ENCODE measurements at regions of chr22 and their contacts with region 1.

Region 1: GRCh38 chr22:46625113-46625842 is 5.1 kb downstream of the GRAMD4 start:
- DNase-seq: no peak
- H3K4me3 ChIP-seq: no peak overlapping the region
- H3K27ac ChIP-seq: no peak overlapping the region
- H3K4me1 ChIP-seq: peaks cover 4% of the 10 kb centered on the region
- H3K27me3 ChIP-seq: no peaks in the 10 kb centered on the region
- CTCF ChIP-seq: no peak
- POLR2A ChIP-seq: no peak

Region 2: DNA sequence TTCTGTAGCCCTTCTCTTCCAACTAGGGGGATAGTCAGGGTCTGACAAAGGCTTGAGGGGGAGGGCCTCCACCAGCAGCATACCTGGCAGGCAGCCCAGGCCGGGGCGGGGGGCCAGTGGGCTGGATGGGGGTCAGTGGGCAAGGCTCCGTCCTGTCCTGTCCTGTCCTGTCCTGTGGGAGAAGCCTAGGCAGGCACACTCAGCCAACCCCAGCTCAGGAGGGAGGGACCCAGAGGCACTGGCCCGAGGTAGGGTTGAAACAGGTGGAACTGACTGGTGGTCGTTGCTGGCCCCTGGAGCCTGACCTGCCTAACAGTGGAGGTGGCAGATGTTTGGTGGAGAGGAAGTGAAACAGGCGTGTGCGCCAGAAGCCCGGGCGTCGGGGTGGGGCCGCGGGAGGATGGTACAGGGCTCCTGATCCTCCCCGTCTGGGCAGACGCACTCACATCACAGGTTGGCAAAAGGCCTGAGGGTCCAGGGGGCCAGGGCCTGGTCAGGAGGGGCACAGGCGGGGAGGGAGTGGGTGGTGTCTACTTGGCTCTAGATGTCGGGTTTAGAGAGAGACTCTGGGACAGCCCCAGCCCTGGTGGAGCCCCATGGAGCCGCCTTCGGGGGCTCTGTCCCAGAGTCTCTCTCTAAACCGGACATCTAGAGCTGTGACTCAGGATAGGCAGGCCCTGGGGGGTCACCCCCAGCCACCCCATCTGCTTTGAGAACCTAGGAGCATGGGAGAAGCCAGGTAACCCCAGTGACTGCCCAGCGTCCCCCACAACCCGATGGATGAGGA is 37.6 kb before region 1 on chr22:
- CTCF ChIA-PET with region 1: no interaction called
- POLR2A ChIA-PET with region 1: no interaction called
- dilution Hi-C with region 1: no loop called
- intact Hi-C with region 1: no loop called
- DNase-seq: no peak
- H3K4me3 ChIP-seq: no peak overlapping the region
- H3K27ac ChIP-seq: no peak overlapping the region
- H3K4me1 ChIP-seq: no peaks in the 10 kb centered on the region
- H3K27me3 ChIP-seq: peaks cover 0 to 1% of the 10 kb centered on the region in 2 experiments
- CTCF ChIP-seq: no peak
- POLR2A ChIP-seq: no peak

Region 3: GRCh38 chr22:46649141-46650077 is 24.1 kb after region 1 on chr22:
- CTCF ChIA-PET with region 1: interaction called, 4 read pairs
- POLR2A ChIA-PET with region 1: no interaction called
- dilution Hi-C with region 1: no loop called
- intact Hi-C with region 1: loop called (anchors 1 kb)
- DNase-seq: no peak
- H3K4me3 ChIP-seq: no peak overlapping the region
- H3K27ac ChIP-seq: no peak overlapping the region
- H3K4me1 ChIP-seq: peaks cover 3% of the 10 kb centered on the region
- H3K27me3 ChIP-seq: no peaks in the 10 kb centered on the region
- CTCF ChIP-seq: no peak
- POLR2A ChIP-seq: no peak

Measured in endothelial cell of umbilical vein (primary cell).